Activated CD4-positive, alpha-beta T cell treated with anti-CD3 and anti-CD28 coated beads, Interleukin-2, amount 10 ng/mL, durations not matched to agents 24 days and 14 days (primary cell): ENCODE measurements at regions of chr4 and their contacts with region 1.

Region 1: DNA sequence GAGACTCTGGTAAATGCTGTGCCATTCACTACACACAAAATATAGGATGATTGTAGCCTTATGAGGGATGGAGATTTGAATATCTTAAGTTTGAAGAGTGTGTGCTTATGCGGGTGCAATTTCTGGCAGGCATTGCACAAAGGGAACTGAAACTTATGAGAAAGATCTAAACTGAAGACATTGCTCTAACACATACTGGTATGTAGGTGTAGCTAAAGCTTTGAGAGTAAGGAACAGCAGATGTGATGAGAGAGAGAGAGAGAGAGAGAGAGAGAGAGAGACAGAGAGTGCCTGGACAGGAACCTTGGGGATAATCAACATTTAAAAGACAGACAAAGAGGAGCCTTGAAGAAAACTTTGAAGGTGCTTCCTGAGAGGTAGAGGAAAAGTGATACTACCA is 379.7 kb downstream of the SPRY1 start:
- DNase-seq: no peak
- H3K4me3 Mint-ChIP-seq: no peak overlapping the region
- H3K27ac Mint-ChIP-seq: no peak overlapping the region
- H3K4me1 Mint-ChIP-seq: peaks cover 2% of the 10 kb centered on the region
- H3K27me3 Mint-ChIP-seq: peaks cover 4% of the 10 kb centered on the region

Region 2: GRCh38 chr4:124111922-124112321 is 335.7 kb after region 1 on chr4:
- intact Hi-C with region 1: loop called (anchors 10 kb)
- DNase-seq: no peak
- H3K4me3 Mint-ChIP-seq: no peak overlapping the region
- H3K27ac Mint-ChIP-seq: no peak overlapping the region
- H3K4me1 Mint-ChIP-seq: no peaks in the 10 kb centered on the region
- H3K27me3 Mint-ChIP-seq: no peaks in the 10 kb centered on the region

Region 3: GRCh38 chr4:124322234-124323065 is 546.2 kb after region 1 on chr4:
- intact Hi-C with region 1: loop called (anchors 2 kb)
- DNase-seq: no peak
- H3K4me3 Mint-ChIP-seq: no peak overlapping the region
- H3K27ac Mint-ChIP-seq: no peak overlapping the region
- H3K4me1 Mint-ChIP-seq: no peaks in the 10 kb centered on the region
- H3K27me3 Mint-ChIP-seq: peaks cover 3% of the 10 kb centered on the region